ENCODE measurements at regions of chr2 and their contacts with region 1.

Region 1: DNA sequence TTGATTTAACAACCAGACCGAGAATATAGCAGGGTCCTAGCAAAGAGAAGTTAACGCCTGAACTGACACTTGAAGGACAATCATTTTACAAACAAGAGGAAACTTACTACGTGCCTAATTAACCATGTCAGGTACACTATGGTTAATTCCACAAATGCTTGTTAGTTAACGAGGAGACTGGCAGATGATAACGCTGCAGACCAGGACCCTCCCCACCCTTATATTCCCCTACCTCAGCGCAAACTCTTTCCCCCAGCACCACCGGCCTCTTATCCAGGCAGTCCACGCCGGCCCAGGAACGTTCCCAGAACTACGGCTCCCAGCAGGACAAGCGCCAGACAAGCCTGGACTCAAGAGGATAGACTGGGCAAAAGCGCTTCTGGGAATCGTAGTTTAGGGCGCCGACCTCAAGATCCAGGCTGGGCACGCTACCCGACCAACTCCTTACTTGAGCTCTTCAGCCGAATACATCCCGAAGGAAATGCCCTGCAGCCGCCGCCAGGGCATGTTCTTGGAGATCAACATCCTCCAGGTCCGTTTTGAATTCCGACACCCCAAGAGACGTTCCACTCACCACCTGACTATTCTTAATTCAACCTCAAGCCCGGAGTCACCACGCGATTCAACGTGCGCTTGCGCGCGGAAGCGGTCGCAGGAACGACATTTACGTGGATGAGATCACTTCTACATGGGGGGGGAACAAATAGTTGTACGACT is at the start of gene POLR1A:
- DNase-seq: peak; percentile 83 to 92
- ATAC-seq: peak; percentile 95 to 98 (median 96)
- H3K4me3 ChIP-seq: peak within 1 kb of the TSS; percentile 66 to 97 (median 84)
- H3K27ac ChIP-seq: peak within 1 kb of the TSS; percentile 33 to 86 (median 82)
- H3K4me1 ChIP-seq: peaks cover 0 to 42% (median 35%) of the 10 kb centered on the region in 9 donors
- H3K27me3 ChIP-seq: no peaks in the 10 kb centered on the region
- CTCF ChIP-seq: peak in 2 of 9 donors; percentile 7 to 8
- total RNA-seq, gene POLR1A: 15.4 to 25.8 (median 21.9) TPM

Region 2: GRCh38 chr2:85707304-85707703 is 398.1 kb before region 1 on chr2:
- intact Hi-C with region 1: no loop called
- DNase-seq: peak in 1 of 2 donors; percentile 83
- ATAC-seq: peak in 6 of 8 donors; percentile 25 to 31 (median 28)
- H3K4me3 ChIP-seq: no peak overlapping the region
- H3K27ac ChIP-seq: peak overlapping the region in 7 of 10 donors; percentile 7 to 86 (median 58)
- H3K4me1 ChIP-seq: peaks cover 5 to 95% (median 43%) of the 10 kb centered on the region in 9 donors
- H3K27me3 ChIP-seq: no peaks in the 10 kb centered on the region
- CTCF ChIP-seq: peak; percentile 87 to 94 (median 89)

Region 3: DNA sequence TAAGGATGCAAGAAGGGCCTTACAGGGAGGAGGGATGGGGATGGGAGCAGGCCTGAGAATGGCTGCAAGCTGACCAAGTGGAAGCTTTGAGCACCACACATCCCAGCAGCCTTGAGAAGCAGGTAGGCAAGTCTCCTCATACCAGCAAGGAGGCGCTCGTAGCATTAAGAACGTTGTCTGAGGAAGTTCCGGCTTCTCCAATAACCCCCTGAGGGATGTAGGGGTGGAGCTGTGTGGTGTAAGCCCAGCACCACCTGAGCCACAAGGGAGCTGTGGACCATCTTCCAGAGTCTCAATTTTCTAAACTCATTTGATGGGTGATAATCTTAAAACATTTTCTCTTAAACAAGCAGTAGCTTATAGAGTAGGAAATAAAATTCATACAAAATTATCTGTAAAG is 267.2 kb before region 1 on chr2:
- intact Hi-C with region 1: no loop called
- DNase-seq: no peak
- ATAC-seq: no peak
- H3K4me3 ChIP-seq: no peak overlapping the region
- H3K27ac ChIP-seq: no peak overlapping the region
- H3K4me1 ChIP-seq: no peaks in the 10 kb centered on the region
- H3K27me3 ChIP-seq: no peaks in the 10 kb centered on the region
- CTCF ChIP-seq: no peak

Region 4: GRCh38 chr2:86150502-86150901 is 45.1 kb after region 1 on chr2:
- intact Hi-C with region 1: loop called in 1 of 10 experiments (anchors 5 kb)
- DNase-seq: no peak
- ATAC-seq: no peak
- H3K4me3 ChIP-seq: no peak overlapping the region
- H3K27ac ChIP-seq: no peak overlapping the region
- H3K4me1 ChIP-seq: no peaks in the 10 kb centered on the region
- H3K27me3 ChIP-seq: no peaks in the 10 kb centered on the region
- CTCF ChIP-seq: no peak